ENCODE measurements at regions of chr3 and their contacts with region 1.

Region 1: GRCh38 chr3:186259612-186260383 is 102.2 kb downstream of the DGKG start:
- DNase-seq: peak; percentile 72
- ATAC-seq: peak; percentile 100
- H3K4me3 ChIP-seq: no peak overlapping the region
- H3K27ac ChIP-seq: peak overlapping the region; percentile 22 to 46; a peak in 3 of 6 replicates
- H3K4me1 ChIP-seq: no peaks in the 10 kb centered on the region; the same call in 2 of the 3 replicates
- CTCF ChIP-seq: peak; percentile 76
- EP300 ChIP-seq: no peak
- POLR2A ChIP-seq: no peak
- RAD21 ChIP-seq: peak; percentile 76 to 81

Region 2: DNA sequence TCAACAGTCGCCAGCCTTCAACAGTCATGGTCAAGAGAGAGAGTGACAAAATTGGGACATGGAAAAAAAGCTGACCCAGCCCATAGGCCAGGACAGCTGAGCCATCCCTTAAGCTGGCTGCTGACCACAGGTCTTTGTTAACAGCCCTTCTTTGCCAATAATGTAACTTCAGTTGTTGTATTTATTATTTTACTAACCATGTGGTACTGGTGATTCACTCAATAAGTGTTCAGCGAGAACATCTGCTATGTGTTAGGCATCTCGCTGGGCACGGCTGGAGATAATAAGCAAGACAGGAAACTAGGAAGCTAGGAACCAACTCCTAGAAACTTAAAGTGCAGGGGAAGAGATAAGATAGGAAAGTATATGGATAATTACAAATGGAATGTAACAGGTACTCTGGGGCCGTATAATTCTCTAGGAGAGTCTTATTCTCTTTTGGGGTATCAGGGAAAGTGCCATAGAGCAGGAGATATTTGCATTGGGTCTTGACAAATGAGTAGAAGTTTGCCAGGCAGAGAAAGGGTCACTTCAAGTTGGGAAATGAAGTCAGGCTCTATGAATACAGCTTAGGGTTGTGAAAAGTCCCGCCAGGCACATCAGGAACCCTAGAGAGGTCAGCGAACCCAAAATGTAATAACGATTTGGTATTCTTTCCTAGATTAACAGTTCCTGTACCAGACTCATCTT is 238.0 kb before region 1 on chr3:
- CTCF ChIA-PET with region 1: no interaction called
- POLR2A ChIA-PET with region 1: no interaction called
- DNase-seq: peak in 1 of 2 experiments; percentile 8
- ATAC-seq: no peak
- H3K4me3 ChIP-seq: no peak overlapping the region
- H3K27ac ChIP-seq: no peak overlapping the region
- H3K4me1 ChIP-seq: no peaks in the 10 kb centered on the region
- CTCF ChIP-seq: no peak
- EP300 ChIP-seq: no peak
- POLR2A ChIP-seq: no peak
- RAD21 ChIP-seq: no peak

Region 3: DNA sequence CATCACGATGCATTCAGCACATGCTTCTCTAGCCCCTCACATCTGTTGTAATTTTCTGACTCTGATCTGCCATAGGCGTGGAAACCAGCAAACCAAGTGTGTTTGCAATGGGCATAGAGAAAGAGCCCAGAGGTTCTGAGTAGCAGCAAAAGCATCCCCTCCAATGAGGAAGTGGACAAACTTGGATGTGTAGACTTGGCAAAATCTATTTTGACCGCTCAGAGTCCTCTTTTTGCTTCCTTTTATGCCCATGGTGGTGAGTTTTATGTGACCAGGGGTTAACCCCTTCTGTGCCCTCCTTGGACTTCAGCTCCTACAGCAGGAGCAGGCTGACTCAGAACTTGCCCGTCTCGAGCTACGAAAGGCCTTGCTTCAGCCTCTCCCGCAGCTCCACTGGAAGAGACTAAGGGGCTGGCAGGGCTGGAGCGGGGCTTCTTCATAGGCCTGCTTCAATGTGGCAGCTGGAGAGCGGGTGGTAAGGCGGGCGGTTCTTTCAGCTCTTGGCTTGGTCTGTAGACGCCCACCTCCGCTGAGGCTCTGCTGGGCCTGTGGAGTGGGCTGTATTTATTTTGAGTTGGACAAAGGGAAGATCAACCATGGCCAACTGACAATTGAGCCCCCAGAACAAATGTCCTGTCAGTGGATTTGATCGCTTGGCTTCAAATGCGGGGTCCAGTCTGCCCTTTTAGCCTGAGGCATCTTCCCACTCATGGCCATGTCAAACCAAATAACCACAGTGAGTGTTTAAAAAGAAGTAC is 144.4 kb before region 1 on chr3:
- CTCF ChIA-PET with region 1: no interaction called
- POLR2A ChIA-PET with region 1: no interaction called
- DNase-seq: no peak
- ATAC-seq: no peak
- H3K4me3 ChIP-seq: no peak overlapping the region
- H3K27ac ChIP-seq: no peak overlapping the region
- H3K4me1 ChIP-seq: peaks cover 1% of the 10 kb centered on the region; the same call in 2 of the 3 replicates
- CTCF ChIP-seq: no peak
- EP300 ChIP-seq: no peak
- POLR2A ChIP-seq: no peak
- RAD21 ChIP-seq: no peak

Region 4: GRCh38 chr3:186247821-186248814 is 11.7 kb before region 1 on chr3:
- CTCF ChIA-PET with region 1: interaction called, 37 read pairs
- POLR2A ChIA-PET with region 1: no interaction called
- DNase-seq: no peak
- ATAC-seq: no peak
- H3K4me3 ChIP-seq: no peak overlapping the region
- H3K27ac ChIP-seq: no peak overlapping the region
- H3K4me1 ChIP-seq: peaks cover 1% of the 10 kb centered on the region; the same call in 2 of the 3 replicates
- CTCF ChIP-seq: no peak
- EP300 ChIP-seq: no peak
- POLR2A ChIP-seq: no peak
- RAD21 ChIP-seq: no peak

Region 5: DNA sequence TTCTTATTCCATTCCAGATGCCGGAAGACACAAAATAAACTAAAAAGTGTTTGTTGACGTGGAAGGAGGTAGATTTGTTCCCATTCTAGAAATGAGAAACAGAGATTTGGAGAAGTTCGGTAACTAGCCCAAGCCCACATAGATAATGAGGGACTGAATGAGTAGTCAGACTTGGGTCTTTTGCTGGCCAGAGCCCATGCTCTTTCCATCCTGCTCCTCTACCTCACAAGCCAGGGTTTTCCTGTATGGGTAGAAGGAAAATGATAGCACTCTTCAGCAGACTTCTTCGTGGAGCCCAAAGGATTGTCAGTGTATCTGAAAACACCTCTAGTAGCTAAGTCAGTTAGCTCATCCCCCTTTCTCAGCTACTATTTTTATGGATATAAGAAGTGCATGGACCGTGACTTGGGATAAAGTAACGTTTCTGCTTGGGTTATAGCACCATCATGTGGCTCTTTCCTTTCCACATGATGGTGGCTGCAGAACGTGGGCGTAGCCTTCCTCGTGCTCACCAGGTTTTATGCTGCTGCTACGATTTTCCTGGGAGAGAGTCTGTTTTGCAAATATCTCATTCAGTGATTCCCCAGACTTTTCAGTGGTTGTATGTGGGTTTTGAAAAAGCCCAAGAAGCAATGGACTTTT is 17.6 kb after region 1 on chr3:
- CTCF ChIA-PET with region 1: interaction called, 11 read pairs
- POLR2A ChIA-PET with region 1: no interaction called
- DNase-seq: peak in 1 of 2 experiments; percentile 51
- ATAC-seq: peak; percentile 85 to 92
- H3K4me3 ChIP-seq: no peak overlapping the region
- H3K27ac ChIP-seq: no peak overlapping the region
- H3K4me1 ChIP-seq: no peaks in the 10 kb centered on the region; the same call in 2 of the 3 replicates
- CTCF ChIP-seq: peak; percentile 53
- EP300 ChIP-seq: no peak
- POLR2A ChIP-seq: no peak
- RAD21 ChIP-seq: peak; percentile 63 to 68

Region 6: GRCh38 chr3:186534113-186534669 is 274.4 kb after region 1 on chr3:
- CTCF ChIA-PET with region 1: interaction called, 83 read pairs
- POLR2A ChIA-PET with region 1: no interaction called
- DNase-seq: no peak
- ATAC-seq: no peak
- H3K4me3 ChIP-seq: no peak overlapping the region
- H3K27ac ChIP-seq: no peak overlapping the region
- H3K4me1 ChIP-seq: no peaks in the 10 kb centered on the region
- CTCF ChIP-seq: no peak
- EP300 ChIP-seq: no peak
- POLR2A ChIP-seq: no peak
- RAD21 ChIP-seq: no peak

Region 7: DNA sequence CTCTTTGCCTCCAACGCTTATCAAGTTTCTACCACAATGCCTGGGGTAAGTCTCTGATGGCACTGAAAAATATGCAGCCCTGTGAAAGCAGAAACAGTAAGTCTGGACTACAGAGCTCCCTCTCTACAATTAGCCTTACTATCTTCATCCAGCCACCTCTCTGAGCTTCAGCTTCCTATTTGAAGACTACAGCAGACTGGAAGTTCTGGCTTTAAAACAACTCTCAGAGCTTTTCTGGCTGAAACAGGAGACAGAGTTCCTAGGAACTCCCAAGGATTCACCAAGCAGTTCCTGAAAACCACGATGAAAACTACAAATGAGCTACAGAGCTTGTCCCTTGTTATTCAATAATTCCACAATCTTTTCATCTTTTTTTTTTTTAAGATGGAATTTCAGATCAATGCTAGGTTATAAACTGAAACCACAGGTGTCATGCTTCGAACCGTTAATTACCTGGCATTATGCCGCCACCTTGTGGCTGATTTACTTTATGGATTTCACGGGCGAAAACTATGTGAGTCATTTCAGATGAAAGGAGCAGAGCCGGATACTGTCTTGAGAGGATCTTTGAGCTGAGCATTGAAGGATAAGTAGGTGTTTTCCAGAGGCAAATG is 280.5 kb after region 1 on chr3:
- CTCF ChIA-PET with region 1: interaction called, 83 read pairs
- POLR2A ChIA-PET with region 1: no interaction called
- DNase-seq: peak; percentile 52 to 59
- ATAC-seq: peak; percentile 70 to 90; a peak in 5 of 6 replicates
- H3K4me3 ChIP-seq: no peak overlapping the region
- H3K27ac ChIP-seq: no peak overlapping the region
- H3K4me1 ChIP-seq: no peaks in the 10 kb centered on the region
- CTCF ChIP-seq: peak; percentile 79
- EP300 ChIP-seq: no peak
- POLR2A ChIP-seq: no peak
- RAD21 ChIP-seq: peak; percentile 82 to 84

Region 8: DNA sequence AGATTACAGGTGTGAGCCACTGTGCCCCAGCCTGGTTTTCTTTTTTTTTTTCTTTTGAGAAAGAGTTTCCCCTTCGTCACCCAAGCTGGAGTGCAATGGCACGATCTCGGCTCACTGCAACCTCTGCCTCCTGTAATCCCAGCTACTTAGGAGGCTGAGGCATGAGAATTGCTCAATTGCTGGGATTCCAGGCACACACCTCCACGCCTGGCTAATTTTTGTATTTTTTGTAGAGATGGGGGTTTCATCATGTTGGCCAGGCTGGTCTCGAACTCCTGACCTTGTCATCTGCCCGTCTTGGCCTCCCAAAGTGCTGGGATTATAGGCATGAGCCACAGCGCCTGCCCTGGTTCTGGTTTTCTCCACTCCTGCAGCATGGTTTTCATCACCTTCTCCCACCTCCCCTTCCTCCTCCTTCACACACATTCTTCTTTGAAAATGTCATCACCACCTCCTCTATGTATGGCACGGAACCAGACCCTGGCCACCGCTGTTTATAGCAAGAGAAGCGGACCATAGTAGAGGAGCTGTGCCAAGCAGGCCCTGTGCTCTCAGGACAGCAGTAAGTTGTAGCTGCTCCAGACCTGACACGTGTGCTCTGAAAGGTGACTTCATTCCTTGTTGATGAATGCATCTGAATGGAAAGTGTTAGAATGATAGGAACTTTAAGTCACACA is 338.4 kb after region 1 on chr3:
- CTCF ChIA-PET with region 1: no interaction called
- POLR2A ChIA-PET with region 1: no interaction called
- DNase-seq: no peak
- ATAC-seq: no peak
- H3K4me3 ChIP-seq: no peak overlapping the region
- H3K27ac ChIP-seq: peak overlapping the region in 1 of 2 experiments; percentile 70; a peak in 3 of 6 replicates
- H3K4me1 ChIP-seq: peaks cover 17% of the 10 kb centered on the region; the same call in 2 of the 3 replicates
- CTCF ChIP-seq: no peak
- EP300 ChIP-seq: no peak
- POLR2A ChIP-seq: no peak
- RAD21 ChIP-seq: no peak